CD4-positive, alpha-beta memory T cell (primary cell): ENCODE measurements at regions of chr6 and their contacts with region 1.

Region 1: GRCh38 chr6:148746363-148747144 is at the start of gene UST:
- DNase-seq: peak; percentile 75 to 86 (median 81)
- H3K4me3 ChIP-seq: peak within 1 kb of the TSS; percentile 31 to 71
- H3K4me3 Mint-ChIP-seq: peak within 1 kb of the TSS; percentile 93 to 99 (median 96)
- H3K27ac ChIP-seq: peak within 1 kb of the TSS; percentile 67
- H3K27ac Mint-ChIP-seq: peak within 1 kb of the TSS; percentile 93 to 97 (median 96)
- H3K4me1 ChIP-seq: peaks cover 35% of the 10 kb centered on the region
- H3K4me1 Mint-ChIP-seq: peaks cover 22 to 48% (median 40%) of the 10 kb centered on the region in 4 donors
- H3K27me3 ChIP-seq: no peaks in the 10 kb centered on the region
- H3K27me3 Mint-ChIP-seq: no peaks in the 10 kb centered on the region
- total RNA-seq, gene UST: 7.0 to 7.6 TPM

Region 2: GRCh38 chr6:148520109-148520841 is 226.3 kb before region 1 on chr6:
- CTCF ChIA-PET with region 1: no interaction called
- POLR2A ChIA-PET with region 1: no interaction called
- intact Hi-C with region 1: no loop called
- DNase-seq: no peak
- H3K4me3 ChIP-seq: no peak overlapping the region
- H3K4me3 Mint-ChIP-seq: no peak overlapping the region
- H3K27ac ChIP-seq: no peak overlapping the region
- H3K27ac Mint-ChIP-seq: no peak overlapping the region
- H3K4me1 ChIP-seq: no peaks in the 10 kb centered on the region
- H3K4me1 Mint-ChIP-seq: peaks cover 4 to 5% (median 5%) of the 10 kb centered on the region in 4 donors
- H3K27me3 ChIP-seq: no peaks in the 10 kb centered on the region
- H3K27me3 Mint-ChIP-seq: peaks cover 0 to 6% of the 10 kb centered on the region in 2 donors

Region 3: GRCh38 chr6:148559848-148560433 is 186.6 kb before region 1 on chr6:
- CTCF ChIA-PET with region 1: no interaction called
- POLR2A ChIA-PET with region 1: no interaction called
- intact Hi-C with region 1: loop called (anchors 1 kb)
- DNase-seq: peak; percentile 48 to 73 (median 65)
- H3K4me3 ChIP-seq: peak overlapping the region in 1 of 2 donors; percentile 56
- H3K4me3 Mint-ChIP-seq: peak overlapping the region in 4 of 8 donors; percentile 12 to 33 (median 20)
- H3K27ac ChIP-seq: no peak overlapping the region
- H3K27ac Mint-ChIP-seq: no peak overlapping the region
- H3K4me1 ChIP-seq: peaks cover 8% of the 10 kb centered on the region
- H3K4me1 Mint-ChIP-seq: peaks cover 7 to 10% (median 8%) of the 10 kb centered on the region in 4 donors
- H3K27me3 ChIP-seq: no peaks in the 10 kb centered on the region
- H3K27me3 Mint-ChIP-seq: peaks cover 3 to 5% of the 10 kb centered on the region in 2 donors

Region 4: GRCh38 chr6:148760568-148761526 is 14.3 kb after region 1 on chr6:
- CTCF ChIA-PET with region 1: interaction called, 24 read pairs
- POLR2A ChIA-PET with region 1: interaction called, 183 read pairs
- intact Hi-C with region 1: loop called (anchors 1 kb)
- DNase-seq: peak; percentile 77 to 87 (median 84)
- H3K4me3 ChIP-seq: peak overlapping the region; percentile 20 to 42
- H3K4me3 Mint-ChIP-seq: peak overlapping the region; percentile 79 to 88 (median 84)
- H3K27ac ChIP-seq: peak overlapping the region; percentile 83
- H3K27ac Mint-ChIP-seq: peak overlapping the region; percentile 91 to 99 (median 96)
- H3K4me1 ChIP-seq: peaks cover 63% of the 10 kb centered on the region
- H3K4me1 Mint-ChIP-seq: peaks cover 67 to 94% (median 76%) of the 10 kb centered on the region in 4 donors
- H3K27me3 ChIP-seq: no peaks in the 10 kb centered on the region
- H3K27me3 Mint-ChIP-seq: no peaks in the 10 kb centered on the region

Region 5: GRCh38 chr6:148831064-148831463 is 84.5 kb after region 1 on chr6:
- CTCF ChIA-PET with region 1: no interaction called
- POLR2A ChIA-PET with region 1: interaction called, 10 read pairs
- intact Hi-C with region 1: loop called (anchors 2 kb)
- DNase-seq: peak; percentile 41 to 65 (median 51)
- H3K4me3 ChIP-seq: peak overlapping the region in 1 of 2 donors; percentile 29
- H3K4me3 Mint-ChIP-seq: peak overlapping the region; percentile 65 to 90 (median 82)
- H3K27ac ChIP-seq: peak overlapping the region; percentile 32
- H3K27ac Mint-ChIP-seq: peak overlapping the region; percentile 31 to 90 (median 66)
- H3K4me1 ChIP-seq: peaks cover 33% of the 10 kb centered on the region
- H3K4me1 Mint-ChIP-seq: peaks cover 29 to 67% (median 42%) of the 10 kb centered on the region in 4 donors
- H3K27me3 ChIP-seq: no peaks in the 10 kb centered on the region
- H3K27me3 Mint-ChIP-seq: no peaks in the 10 kb centered on the region

Region 6: GRCh38 chr6:149028767-149029405 is 282.3 kb after region 1 on chr6:
- CTCF ChIA-PET with region 1: interaction called, 4 read pairs
- POLR2A ChIA-PET with region 1: no interaction called
- intact Hi-C with region 1: loop called (anchors 2 kb)
- DNase-seq: peak; percentile 77 to 80 (median 78)
- H3K4me3 ChIP-seq: no peak overlapping the region
- H3K4me3 Mint-ChIP-seq: peak overlapping the region in 2 of 8 donors; percentile 66 to 69
- H3K27ac ChIP-seq: no peak overlapping the region
- H3K27ac Mint-ChIP-seq: peak overlapping the region in 6 of 7 donors; percentile 10 to 93 (median 78)
- H3K4me1 ChIP-seq: peaks cover 49% of the 10 kb centered on the region
- H3K4me1 Mint-ChIP-seq: peaks cover 33 to 46% (median 42%) of the 10 kb centered on the region in 4 donors
- H3K27me3 ChIP-seq: no peaks in the 10 kb centered on the region
- H3K27me3 Mint-ChIP-seq: no peaks in the 10 kb centered on the region